ENCODE measurements at regions of chr5 and their contacts with region 1.

Region 1: DNA sequence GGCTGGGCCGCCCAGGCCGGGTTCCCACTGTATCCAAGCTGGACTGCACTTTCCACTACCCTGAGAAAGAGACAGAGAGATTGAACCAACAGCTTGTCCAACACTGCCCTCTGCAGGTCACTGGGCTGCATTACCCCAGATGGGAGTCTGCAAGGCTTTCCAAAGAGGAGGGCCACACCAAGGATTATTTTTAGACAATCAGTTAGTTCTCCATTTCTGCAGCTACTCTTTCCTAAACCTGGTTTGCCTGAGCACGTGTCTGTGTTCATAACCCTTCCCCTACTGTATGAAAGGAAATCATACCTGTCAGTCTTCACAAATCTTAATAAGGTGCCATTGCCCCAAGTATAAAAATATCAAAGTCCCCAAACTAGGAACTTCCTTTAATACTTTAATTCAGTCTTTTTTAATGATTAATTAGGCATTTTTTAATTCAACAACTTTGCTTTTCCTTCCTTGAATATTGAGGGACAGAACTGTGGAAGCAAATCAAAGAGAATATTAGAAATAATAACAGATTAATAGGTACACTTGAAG is 13.4 kb upstream of the FGF1 start:
- DNase-seq: peak; percentile 89
- ATAC-seq: peak; percentile 90 to 92

Region 2: DNA sequence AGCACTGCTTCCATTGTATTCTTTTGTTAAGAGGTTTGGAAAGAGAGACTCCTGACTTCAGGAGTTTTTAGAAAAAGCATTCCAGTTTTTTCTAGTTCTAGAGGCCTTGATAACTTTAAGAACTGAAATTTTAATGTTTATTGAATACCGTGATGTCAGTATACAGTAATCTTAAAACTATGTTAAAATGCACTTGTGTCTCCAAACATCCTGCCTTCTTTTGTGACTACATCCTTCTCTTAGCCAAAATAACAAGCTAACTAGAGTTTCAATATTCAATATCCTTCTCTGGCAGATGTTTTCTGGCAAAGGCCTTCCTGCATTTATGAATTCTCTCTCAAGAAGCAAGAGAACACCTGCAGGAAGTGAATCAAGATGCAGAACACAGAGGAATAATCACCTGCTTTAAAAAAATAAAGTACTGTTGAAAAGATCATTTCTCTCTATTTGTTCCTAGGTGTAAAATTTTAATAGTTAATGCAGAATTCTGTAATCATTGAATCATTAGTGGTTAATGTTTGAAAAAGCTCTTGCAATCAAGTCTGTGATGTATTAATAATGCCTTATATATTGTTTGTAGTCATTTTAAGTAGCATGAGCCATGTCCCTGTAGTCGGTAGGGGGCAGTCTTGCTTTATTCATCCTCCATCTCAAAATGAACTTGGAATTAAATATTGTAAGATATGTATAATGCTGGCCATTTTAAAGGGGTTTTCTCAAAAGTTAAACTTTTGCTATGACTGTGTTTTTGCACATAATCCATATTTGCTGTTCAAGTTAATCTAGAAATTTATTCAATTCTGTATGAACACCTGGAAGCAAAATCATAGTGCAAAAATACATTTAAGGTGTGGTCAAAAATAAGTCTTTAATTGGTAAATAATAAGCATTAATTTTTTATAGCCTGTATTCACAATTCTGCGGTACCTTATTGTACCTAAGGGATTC is 547.5 kb before region 1 on chr5:
- intact Hi-C with region 1: loop called in 1 of 2 experiments (anchors 5 kb)
- DNase-seq: peak; percentile 44
- ATAC-seq: peak; percentile 60 to 61

Region 3: GRCh38 chr5:142611154-142611553 is 88.1 kb before region 1 on chr5:
- intact Hi-C with region 1: loop called (anchors 2 kb)
- DNase-seq: peak; percentile 75
- ATAC-seq: peak; percentile 88

Region 4: DNA sequence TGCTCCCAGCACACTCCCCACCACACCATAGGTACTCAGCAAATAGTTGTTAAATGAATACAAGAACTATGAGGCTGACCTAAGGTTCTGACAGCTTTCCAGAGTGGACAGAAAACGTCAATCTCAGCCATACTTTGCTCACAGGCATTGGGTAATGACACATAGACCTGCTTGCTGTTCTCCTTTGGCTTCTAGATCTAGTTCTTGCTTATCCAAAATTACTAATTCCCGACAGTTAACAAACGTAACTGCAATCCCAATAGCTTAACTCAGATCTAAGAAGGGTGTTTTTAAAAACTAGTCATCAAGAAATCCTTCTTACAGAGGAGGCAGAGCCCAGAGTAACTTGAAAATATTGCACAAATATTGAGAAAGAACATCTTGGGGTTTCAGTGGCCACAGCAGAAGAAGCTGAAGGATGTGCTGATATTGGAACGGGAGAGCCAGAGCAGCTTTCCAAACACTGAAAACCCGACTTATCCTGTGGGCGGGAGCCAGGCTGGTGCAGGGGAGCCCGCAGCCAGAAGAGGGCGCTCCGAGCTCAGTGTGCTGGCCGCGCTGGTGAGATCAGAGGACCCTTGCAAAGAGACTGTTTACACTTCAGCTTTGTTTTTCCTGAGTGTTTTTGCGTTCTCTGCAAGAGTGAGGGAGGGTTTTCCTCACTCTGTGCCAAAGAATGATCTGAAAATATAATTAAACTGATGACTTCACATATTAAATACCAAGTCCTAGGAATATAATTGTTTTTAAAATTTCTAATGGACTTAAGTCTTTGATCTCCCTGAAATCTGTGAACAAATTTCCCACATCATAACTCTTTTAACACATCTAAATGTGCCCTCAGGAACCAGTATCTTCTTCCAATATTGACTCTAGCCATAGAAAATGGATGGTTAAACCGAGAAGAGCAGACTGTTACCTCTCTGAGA is 43.6 kb before region 1 on chr5:
- intact Hi-C with region 1: loop called (anchors 1 to 2 kb)
- DNase-seq: peak; percentile 84
- ATAC-seq: peak; percentile 93 to 95

Measured in left cardiac atrium (tissue), 4 donors.